ENCODE measurements at regions of chr3 and their contacts with region 1.

Region 1: DNA sequence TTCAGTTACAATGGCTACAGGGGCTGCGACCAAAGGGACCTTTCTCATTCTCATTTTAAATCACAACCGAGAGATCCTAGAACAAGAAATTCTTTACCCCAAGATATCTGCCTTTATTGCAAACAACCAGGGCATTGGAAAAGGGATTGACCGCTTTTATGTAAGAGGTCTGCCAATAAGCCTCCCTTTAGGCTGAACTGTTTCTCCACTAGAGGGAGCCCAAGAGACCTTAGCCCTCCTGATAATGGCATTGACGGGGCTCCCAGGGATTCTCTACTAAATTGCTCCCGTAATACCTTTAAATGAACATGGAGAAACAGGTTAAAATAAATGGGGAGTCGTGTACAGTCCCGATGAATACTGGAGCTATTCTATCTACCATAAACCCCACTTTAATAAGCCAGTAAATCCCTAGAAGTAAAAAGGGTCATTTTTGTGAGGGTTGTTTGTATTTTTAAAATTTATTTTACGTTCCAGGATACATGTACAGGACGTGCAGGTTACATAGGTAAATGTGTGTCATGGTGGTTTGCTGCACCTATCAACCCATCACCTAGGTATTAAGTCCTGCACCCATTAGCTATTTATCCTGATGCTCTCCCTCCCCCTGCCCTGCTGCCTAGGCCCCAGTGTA is 7.5 kb upstream of the IGSF10 start:
- DNase-seq: no peak
- ATAC-seq: peak; percentile 56
- H3K4me3 Mint-ChIP-seq: no peak overlapping the region
- H3K27ac Mint-ChIP-seq: no peak overlapping the region
- H3K4me1 Mint-ChIP-seq: peaks cover 6% of the 10 kb centered on the region
- H3K27me3 Mint-ChIP-seq: peaks cover 2% of the 10 kb centered on the region
- CTCF ChIP-seq: no peak

Region 2: GRCh38 chr3:151479452-151479851 is 11.1 kb after region 1 on chr3:
- CTCF ChIA-PET with region 1: interaction called, 13 read pairs
- POLR2A ChIA-PET with region 1: no interaction called
- intact Hi-C with region 1: no loop called
- DNase-seq: no peak
- ATAC-seq: no peak
- H3K4me3 Mint-ChIP-seq: no peak overlapping the region
- H3K27ac Mint-ChIP-seq: no peak overlapping the region
- H3K4me1 Mint-ChIP-seq: no peaks in the 10 kb centered on the region
- H3K27me3 Mint-ChIP-seq: peaks cover 5% of the 10 kb centered on the region
- CTCF ChIP-seq: no peak

Region 3: DNA sequence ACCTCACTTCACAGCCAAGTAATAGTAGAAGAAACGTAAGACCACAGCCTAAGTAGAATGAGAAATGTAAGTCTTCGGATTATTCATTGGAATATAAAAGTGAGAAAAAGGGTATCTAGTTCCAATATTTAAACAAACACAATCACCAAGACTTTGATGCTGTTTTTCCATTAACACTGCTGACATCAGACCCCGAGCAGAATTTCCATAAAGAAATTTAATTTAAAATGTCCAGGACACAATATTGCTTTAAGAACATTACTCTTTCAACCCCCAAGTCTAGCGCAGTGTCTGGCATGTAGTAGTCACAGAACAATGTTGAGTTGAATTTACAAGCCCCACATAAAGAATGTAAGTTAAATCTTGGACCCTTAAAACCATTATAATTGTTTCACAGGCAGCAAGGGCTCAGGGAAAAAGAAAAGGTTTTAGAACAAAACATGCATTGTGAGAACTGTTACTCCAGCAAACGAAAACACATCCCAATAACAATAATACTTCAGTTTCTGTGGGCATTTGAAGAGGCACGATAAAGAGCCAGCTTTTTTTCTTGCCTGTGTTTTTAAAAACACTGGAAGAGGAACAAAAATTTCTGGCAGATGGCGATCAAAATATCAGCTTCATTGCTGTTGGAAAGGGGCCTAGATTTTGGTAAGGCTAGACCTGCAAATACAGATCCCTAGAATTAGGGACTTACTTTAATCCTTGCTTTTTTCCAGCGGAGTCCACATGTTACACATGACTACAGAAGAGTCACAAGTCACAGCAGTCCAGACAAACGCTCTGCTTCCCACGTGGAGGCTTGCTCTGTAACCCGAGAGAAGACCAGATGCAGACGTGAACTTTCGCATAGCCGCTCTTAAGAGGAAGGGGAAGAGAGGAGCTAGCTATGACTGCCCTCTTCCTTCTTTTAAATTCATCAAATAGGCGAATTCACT is 70.3 kb after region 1 on chr3:
- CTCF ChIA-PET with region 1: no interaction called
- POLR2A ChIA-PET with region 1: no interaction called
- intact Hi-C with region 1: no loop called
- DNase-seq: no peak
- ATAC-seq: no peak
- H3K4me3 Mint-ChIP-seq: no peak overlapping the region
- H3K27ac Mint-ChIP-seq: no peak overlapping the region
- H3K4me1 Mint-ChIP-seq: no peaks in the 10 kb centered on the region
- H3K27me3 Mint-ChIP-seq: no peaks in the 10 kb centered on the region
- CTCF ChIP-seq: no peak

Region 4: DNA sequence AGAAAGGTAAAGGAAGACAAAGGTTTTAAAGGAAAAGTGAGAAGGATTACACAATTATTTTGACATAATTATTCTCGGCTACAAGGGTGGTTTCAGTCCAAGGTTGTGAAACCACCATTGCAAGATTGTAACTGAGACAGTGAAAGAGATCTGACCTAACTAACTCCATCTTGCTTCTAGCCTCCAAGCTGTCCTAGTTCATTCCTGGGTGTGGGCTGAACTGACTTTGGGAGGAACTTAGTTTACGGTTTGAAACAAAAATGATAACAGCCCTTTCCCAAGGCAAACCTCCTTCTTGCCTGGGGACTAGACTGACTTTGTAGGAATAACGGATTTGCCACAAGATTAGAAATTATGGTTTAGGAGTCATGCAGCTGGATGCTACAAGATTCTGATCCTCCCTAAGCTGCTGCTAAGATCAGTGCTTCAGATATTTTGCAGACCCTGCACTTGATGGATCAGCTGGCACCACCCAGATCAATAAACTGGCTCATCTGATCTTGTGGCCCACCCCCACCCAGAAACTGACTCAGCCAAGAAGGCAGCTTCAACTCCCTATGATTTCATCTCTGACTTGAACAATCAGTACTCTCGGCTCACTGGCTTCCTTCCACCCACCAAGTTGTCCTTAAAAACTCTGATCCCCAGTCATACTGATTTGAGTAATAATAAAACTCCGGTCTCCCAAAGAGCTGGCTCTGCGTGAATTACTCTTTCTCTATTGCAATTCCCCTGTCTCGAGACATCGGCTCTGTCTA is 207.6 kb after region 1 on chr3:
- CTCF ChIA-PET with region 1: no interaction called
- POLR2A ChIA-PET with region 1: no interaction called
- intact Hi-C with region 1: no loop called
- DNase-seq: no peak
- ATAC-seq: no peak
- H3K4me3 Mint-ChIP-seq: no peak overlapping the region
- H3K27ac Mint-ChIP-seq: no peak overlapping the region
- H3K4me1 Mint-ChIP-seq: no peaks in the 10 kb centered on the region
- H3K27me3 Mint-ChIP-seq: peaks cover 3% of the 10 kb centered on the region
- CTCF ChIP-seq: no peak

Region 5: DNA sequence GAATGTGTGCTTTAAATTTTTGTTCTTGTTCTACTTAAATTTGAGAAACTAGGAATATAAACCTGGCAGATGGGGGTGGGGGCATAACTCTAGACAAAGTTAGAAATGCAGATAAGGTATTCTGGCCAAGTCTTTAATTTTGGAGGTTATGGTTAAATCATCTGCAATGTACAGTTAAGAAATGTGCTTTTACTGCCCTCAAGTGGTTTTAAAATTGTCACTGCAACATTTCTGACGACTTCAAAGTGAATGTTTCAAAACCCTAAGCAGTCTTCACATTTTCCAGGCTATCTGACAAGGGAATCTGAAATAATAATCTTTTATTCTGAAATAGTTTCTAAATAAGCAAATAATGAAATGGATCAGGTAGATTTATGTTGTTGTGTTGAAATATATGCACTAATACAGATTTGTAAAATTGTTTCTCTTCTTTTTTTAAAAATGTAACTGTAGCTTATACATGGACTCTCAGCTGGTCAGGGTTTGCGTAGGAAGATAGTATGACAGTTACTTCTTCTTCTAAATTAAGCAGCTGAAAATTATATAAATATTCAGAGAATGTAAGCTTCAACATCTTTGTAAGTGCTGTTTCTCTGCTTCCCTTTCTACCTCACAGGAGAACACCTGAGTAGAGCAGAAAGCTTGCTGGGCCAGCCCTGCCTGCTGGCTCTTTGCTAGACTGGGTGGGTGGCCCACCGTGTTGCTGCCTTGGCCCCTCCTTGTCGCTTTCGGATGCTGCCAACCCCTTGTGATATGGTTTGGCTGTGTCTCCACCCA is 450.0 kb after region 1 on chr3:
- CTCF ChIA-PET with region 1: interaction called, 4 read pairs
- POLR2A ChIA-PET with region 1: no interaction called
- intact Hi-C with region 1: loop called (anchors 1 kb)
- DNase-seq: no peak
- ATAC-seq: no peak
- H3K4me3 Mint-ChIP-seq: no peak overlapping the region
- H3K27ac Mint-ChIP-seq: no peak overlapping the region
- H3K4me1 Mint-ChIP-seq: no peaks in the 10 kb centered on the region
- H3K27me3 Mint-ChIP-seq: no peaks in the 10 kb centered on the region
- CTCF ChIP-seq: peak; percentile 18